ENCODE measurements at regions of chr20 and their contacts with region 1.

Region 1: DNA sequence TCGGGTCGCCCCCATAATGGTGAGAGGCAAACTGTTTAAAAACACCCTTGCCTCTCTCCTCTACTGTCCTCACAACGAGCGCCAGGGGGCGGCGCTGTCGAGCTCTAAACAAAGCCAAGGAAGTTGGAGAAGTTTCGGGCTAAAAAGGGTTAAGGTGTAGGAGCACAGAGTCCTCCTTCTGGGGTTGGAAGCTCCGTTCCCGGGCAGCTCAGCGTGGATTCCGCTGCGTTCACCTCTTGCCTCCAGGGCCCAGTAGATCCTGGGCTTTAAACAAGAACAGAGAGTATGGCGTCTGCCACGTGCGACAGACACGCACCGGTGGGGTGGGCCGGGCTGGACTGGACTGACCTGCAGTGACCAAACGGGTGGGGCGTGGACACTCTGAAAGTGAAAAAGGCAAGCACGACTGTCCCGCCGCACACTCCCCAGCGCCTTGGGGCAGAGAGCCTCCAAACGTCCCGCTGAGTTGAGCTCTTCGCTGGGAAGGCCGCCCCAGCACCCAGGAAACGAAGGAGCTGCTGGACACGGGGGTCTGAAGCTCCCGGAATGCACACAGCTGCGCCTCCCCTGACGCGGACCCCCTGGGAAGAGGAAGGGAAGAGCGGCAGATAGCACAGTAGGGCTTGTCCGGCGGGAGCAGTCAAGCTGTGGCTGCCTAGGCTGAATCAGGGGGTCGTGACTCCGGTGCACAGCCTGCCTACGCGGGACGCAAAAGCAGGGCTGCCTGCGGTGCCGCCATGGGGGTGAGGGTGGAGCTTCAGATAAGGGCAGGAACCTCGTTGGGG is 1.6 kb upstream of the THBD start:
- DNase-seq: peak in 6 of 10 donors; percentile 44 to 93 (median 57)

Region 2: DNA sequence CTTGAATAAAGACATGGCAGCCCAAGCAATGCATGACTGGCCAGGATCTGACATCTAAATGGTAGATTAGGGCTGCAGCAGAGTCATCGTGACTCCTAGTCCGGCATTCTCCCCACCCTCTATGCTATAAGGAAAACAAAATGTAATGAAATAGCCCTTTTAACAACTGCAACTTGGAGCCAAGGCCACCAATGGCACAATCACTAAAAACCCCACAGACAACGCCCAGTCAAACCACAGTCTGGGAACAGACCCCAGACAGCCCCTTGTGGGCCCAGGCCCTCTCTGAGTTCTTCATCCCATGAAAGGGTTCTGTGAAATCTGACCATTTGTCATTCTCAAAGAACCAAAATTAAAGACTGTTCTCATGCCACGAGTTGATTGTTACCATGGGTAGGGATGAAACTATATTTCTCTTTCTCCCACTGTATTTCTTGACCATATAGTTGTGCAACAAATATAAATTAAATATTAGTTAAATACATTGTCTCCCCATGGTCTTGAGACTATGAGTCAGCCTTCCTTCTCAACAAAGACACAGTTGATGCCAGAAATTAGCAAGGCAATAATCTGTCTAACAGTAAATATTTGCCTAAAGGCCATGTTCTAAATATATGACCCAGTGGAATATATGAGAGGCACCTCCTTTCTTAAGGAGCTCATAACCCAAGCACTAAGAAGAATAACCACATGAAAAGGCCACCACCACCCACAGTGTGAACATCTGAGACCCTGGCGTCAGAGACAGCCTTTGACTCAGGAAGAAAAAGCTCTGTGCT is 101.5 kb before region 1 on chr20:
- intact Hi-C with region 1: loop called (anchors 10 kb)
- DNase-seq: no peak

Region 3: GRCh38 chr20:23106261-23106851 is 55.3 kb after region 1 on chr20:
- intact Hi-C with region 1: loop called (anchors 10 kb)
- DNase-seq: peak in 1 of 10 donors; percentile 61

Region 4: DNA sequence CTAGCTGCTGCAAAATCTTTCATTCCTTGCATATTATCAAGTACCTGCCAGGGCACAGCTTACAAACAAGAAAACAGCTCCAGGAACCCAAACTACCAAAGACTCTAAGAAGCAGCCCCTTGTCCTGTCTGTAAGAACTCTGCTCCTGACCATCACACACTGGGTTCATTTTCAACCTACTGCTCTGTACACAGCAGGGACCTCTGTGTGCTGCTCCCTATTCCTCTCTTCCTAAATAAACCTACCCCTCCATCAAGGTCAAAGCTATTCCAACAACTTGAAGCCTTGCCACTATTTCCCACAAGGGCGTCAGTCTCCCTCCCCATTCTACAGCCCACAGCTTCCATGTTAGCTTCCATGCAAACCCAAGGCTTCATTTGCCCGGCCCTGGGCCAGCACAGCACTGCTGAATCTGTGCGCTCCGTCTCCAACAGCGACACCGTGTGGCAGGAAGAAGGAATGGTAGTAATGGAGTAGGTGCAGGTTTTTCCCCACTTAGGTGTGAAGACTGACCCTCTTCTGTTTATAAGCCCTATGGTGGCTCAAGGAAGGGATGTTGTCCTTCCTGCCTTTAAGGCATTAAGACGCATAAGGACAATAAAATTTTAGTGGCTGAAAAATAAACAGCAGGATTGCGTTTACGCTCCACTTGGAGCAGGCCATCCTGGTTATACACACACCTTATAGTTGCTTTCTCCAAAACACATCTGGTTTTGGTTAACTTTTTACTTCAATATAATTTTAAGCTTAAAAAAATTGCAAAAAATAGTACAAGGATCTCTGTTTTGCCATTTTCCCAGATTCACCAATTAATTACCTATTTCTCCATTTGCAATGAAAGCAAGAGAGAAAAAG is 184.4 kb after region 1 on chr20:
- intact Hi-C with region 1: loop called (anchors 10 kb)
- DNase-seq: peak in 6 of 10 donors; percentile 47 to 91 (median 54)

Region 5: GRCh38 chr20:23350196-23350903 is 299.3 kb after region 1 on chr20 and contains the start of gene NXT1:
- intact Hi-C with region 1: loop called (anchors 10 kb)
- DNase-seq: peak; percentile 94 to 100 (median 97)